ENCODE measurements at regions of chr4 and their contacts with region 1.

Region 1: DNA sequence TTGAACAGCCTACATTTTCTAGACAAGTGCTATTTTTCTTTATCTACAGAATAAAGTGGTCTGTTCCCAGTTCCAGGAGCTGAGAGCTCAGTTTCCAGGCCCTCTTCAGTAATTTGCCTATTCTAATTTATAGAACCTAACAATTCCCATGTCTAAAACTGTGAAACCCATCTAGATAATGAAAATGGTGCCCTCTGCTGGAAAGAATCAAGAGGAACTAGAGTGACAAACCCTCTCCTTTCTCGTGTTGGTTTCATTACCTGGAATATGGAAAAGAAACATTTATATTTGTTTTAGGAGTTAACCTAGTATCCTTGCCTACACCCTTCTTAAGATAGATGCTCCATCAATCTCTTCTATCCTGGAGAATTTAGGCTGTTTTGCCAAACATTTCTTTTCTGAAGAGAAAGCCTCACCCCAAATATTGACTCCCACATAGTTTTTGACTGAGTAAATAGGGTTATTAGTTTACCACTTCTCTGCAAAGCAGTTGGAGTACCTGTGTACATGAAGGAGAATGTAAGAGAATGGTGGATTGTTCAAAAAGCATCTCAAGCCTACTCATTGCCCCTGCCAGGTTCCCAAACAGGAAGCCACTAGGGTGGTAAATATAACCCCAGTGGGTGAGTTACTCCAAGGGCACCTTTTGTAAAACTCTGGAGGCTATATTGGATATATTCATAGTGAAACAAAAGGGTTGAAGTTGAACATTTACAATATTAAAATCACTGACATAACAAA is 121.6 kb downstream of the RASL11B start:
- DNase-seq: peak; percentile 50
- ATAC-seq: peak; percentile 81
- H3K4me3 ChIP-seq: no peak overlapping the region
- H3K27ac ChIP-seq: no peak overlapping the region
- H3K4me1 ChIP-seq: peaks cover 2 to 4% of the 10 kb centered on the region in 2 experiments; a peak in 1 of 4 replicates
- H3K27me3 ChIP-seq: no peaks in the 10 kb centered on the region
- CTCF ChIP-seq: peak; percentile 45 to 68 (median 60); a peak in 5 of 6 replicates
- POLR2A ChIP-seq: no peak
- RAD21 ChIP-seq: peak; percentile 69

Region 2: DNA sequence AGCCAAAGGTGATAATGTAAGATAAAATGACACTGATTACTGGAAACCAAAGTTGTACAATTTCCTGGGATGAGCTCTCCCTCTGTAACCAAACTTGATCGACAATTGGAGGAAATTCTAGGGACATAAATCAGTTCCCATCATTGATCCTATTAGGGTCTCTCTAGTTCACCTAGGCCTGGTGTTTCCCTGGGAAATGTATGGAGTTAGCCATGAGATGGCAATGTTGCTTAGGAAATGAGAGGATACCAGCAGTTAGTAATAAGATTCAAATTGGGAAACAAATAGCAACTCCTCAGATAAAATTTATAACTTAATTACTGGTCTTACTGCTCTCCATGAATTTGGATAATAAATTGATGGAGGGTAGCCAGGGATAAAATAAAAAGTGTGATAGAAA is 880.4 kb before region 1 on chr4:
- CTCF ChIA-PET with region 1: no interaction called
- POLR2A ChIA-PET with region 1: no interaction called
- RAD21 ChIA-PET with region 1: no interaction called
- intact Hi-C with region 1: loop called (anchors 2 kb)
- DNase-seq: no peak
- ATAC-seq: no peak; the same call in 1 of the 2 replicates
- H3K4me3 ChIP-seq: no peak overlapping the region
- H3K27ac ChIP-seq: no peak overlapping the region
- H3K4me1 ChIP-seq: no peaks in the 10 kb centered on the region
- H3K27me3 ChIP-seq: no peaks in the 10 kb centered on the region
- CTCF ChIP-seq: peak in 2 of 3 experiments; percentile 19 to 34; a peak in 2 of 6 replicates
- POLR2A ChIP-seq: no peak
- RAD21 ChIP-seq: peak; percentile 33; the same call in 1 of the 2 replicates

Region 3: DNA sequence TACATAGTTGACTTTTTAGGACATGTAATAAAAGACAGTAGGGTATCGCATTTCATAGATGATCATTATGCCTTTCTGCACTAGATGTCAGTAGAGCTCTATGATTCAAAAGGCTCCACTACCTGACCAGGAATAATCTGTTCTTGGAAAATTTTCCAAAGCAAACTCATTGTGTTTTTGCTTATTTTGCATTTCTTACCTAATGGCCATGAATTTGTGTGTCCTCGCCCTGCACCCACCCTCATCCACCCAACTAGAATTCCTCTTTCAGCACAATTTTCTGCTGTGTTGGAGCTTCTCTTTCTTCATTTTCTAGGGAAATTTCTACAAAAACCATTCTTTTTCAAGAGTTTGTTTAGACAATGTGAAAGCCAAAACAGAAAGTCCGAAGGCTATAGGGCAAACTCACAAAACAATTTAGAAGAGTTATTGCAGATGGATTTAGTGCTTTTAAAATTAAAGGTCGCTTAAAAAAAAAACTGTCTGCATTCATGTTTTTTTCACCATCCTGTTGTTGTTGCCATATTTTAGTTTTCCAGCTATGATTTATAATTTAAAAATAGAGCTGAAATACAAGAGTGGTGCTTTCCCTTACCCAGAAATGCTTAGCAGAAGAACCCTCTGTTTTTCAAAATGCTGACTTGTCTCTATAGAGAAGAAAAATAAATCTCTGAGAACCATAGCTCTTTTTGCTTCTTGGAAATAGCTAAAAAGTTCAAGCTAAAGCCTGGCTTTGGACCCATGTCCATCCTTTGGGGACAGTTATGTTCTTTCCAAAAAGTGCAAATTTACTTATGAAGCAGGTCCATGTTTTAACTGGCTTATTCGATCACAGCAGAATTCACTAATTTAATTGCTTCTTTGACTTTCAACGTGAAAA is 748.9 kb before region 1 on chr4:
- CTCF ChIA-PET with region 1: interaction called, 24 read pairs
- POLR2A ChIA-PET with region 1: no interaction called
- RAD21 ChIA-PET with region 1: no interaction called
- intact Hi-C with region 1: loop called (anchors 1 kb)
- DNase-seq: peak; percentile 41
- ATAC-seq: peak; percentile 89
- H3K4me3 ChIP-seq: no peak overlapping the region
- H3K27ac ChIP-seq: no peak overlapping the region
- H3K4me1 ChIP-seq: peaks cover 0 to 2% of the 10 kb centered on the region in 2 experiments; a peak in 1 of 4 replicates
- H3K27me3 ChIP-seq: peaks cover 19% of the 10 kb centered on the region
- CTCF ChIP-seq: peak; percentile 35 to 66 (median 51); a peak in 4 of 6 replicates
- POLR2A ChIP-seq: no peak
- RAD21 ChIP-seq: peak; percentile 79

Region 4: GRCh38 chr4:52376132-52376704 is 607.5 kb before region 1 on chr4:
- CTCF ChIA-PET with region 1: interaction called, 28 read pairs
- POLR2A ChIA-PET with region 1: no interaction called
- RAD21 ChIA-PET with region 1: no interaction called
- intact Hi-C with region 1: loop called (anchors 1 kb)
- DNase-seq: peak; percentile 33
- ATAC-seq: 0 out of 2 replicates have a peak, but pooled peaks have one; percentile 27
- H3K4me3 ChIP-seq: no peak overlapping the region
- H3K27ac ChIP-seq: no peak overlapping the region
- H3K4me1 ChIP-seq: no peaks in the 10 kb centered on the region
- H3K27me3 ChIP-seq: peaks cover 10% of the 10 kb centered on the region
- CTCF ChIP-seq: peak; percentile 33 to 74 (median 70); a peak in 4 of 6 replicates
- POLR2A ChIP-seq: no peak
- RAD21 ChIP-seq: peak; percentile 76

Region 5: DNA sequence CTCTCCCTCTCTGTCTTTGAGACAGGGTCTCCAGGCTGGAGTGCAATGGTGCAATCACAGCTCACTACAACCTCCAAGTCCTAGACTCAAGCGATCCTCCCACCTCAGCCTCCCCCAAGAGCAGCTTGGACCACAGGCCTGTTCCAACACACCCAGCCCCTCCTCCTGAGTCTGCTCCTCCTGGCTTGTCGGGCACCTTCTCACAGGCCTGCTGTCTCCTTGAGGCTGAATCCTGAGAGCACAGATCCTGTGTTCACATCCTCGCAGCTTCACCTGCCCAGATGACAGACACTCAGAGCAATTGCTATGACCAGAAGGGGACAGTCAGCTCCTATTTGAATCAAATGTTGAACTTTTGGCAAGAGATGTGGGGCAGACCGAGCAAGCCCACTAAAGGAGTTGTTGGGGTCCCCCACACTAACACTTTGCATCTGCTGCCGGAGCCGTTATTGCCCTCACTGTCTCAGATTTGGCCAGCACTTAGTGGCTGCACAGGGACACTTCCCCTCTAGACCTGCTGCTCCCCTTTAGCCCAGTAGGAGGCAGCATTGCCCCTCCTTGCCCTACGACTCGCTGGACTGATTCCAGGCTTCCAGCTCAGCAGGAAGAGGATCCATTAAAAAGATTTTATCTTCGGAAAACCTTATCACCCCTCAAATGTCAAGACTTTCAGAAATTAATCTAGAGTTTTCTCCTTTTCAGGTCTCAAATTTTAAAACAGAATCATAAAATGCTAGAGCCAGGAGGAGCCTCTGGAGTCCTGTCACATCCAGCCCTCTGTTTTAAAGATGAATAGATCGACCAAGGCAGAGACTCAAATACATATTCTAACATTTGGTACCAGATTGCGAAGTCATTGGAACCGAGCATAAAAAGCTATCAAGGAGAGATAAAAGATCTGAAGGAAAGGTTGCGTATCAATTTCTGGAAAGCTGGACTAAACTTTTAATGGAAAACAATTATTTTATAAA is 438.3 kb before region 1 on chr4:
- CTCF ChIA-PET with region 1: interaction called, 37 read pairs
- POLR2A ChIA-PET with region 1: no interaction called
- RAD21 ChIA-PET with region 1: interaction called, 3 to 9 read pairs
- intact Hi-C with region 1: loop called (anchors 2 kb)
- DNase-seq: peak; percentile 52
- ATAC-seq: peak; percentile 97
- H3K4me3 ChIP-seq: no peak overlapping the region; a peak in 1 of 4 replicates
- H3K27ac ChIP-seq: no peak overlapping the region
- H3K4me1 ChIP-seq: peaks cover 0 to 3% of the 10 kb centered on the region in 2 experiments; a peak in 1 of 4 replicates
- H3K27me3 ChIP-seq: no peaks in the 10 kb centered on the region
- CTCF ChIP-seq: peak; percentile 84 to 98 (median 95)
- POLR2A ChIP-seq: no peak
- RAD21 ChIP-seq: peak; percentile 94

Region 6: GRCh38 chr4:52588097-52588782 is 395.5 kb before region 1 on chr4:
- CTCF ChIA-PET with region 1: interaction called, 10 read pairs
- POLR2A ChIA-PET with region 1: no interaction called
- RAD21 ChIA-PET with region 1: no interaction called
- intact Hi-C with region 1: loop called (anchors 1 kb)
- DNase-seq: peak; percentile 12
- ATAC-seq: peak; percentile 87
- H3K4me3 ChIP-seq: no peak overlapping the region
- H3K27ac ChIP-seq: no peak overlapping the region
- H3K4me1 ChIP-seq: no peaks in the 10 kb centered on the region
- H3K27me3 ChIP-seq: no peaks in the 10 kb centered on the region
- CTCF ChIP-seq: peak; percentile 21 to 75 (median 63); a peak in 5 of 6 replicates
- POLR2A ChIP-seq: no peak
- RAD21 ChIP-seq: peak; percentile 55

Region 7: GRCh38 chr4:52665592-52665991 is 318.1 kb before region 1 on chr4:
- CTCF ChIA-PET with region 1: no interaction called
- POLR2A ChIA-PET with region 1: no interaction called
- RAD21 ChIA-PET with region 1: no interaction called
- intact Hi-C with region 1: loop called (anchors 2 kb)
- DNase-seq: peak; percentile 44
- ATAC-seq: peak; percentile 86
- H3K4me3 ChIP-seq: no peak overlapping the region
- H3K27ac ChIP-seq: no peak overlapping the region
- H3K4me1 ChIP-seq: peaks cover 4 to 23% of the 10 kb centered on the region in 2 experiments; a peak in 3 of 4 replicates
- H3K27me3 ChIP-seq: no peaks in the 10 kb centered on the region
- CTCF ChIP-seq: peak; percentile 38 to 82 (median 57)
- POLR2A ChIP-seq: no peak
- RAD21 ChIP-seq: peak; percentile 76

Region 8: GRCh38 chr4:53015681-53016080 is 31.9 kb after region 1 on chr4:
- CTCF ChIA-PET with region 1: no interaction called
- POLR2A ChIA-PET with region 1: no interaction called
- RAD21 ChIA-PET with region 1: no interaction called
- intact Hi-C with region 1: no loop called
- DNase-seq: peak; percentile 26
- ATAC-seq: peak; percentile 52; the same call in 1 of the 2 replicates
- H3K4me3 ChIP-seq: no peak overlapping the region
- H3K27ac ChIP-seq: no peak overlapping the region
- H3K4me1 ChIP-seq: peaks cover 3 to 8% of the 10 kb centered on the region in 2 experiments; a peak in 2 of 4 replicates
- H3K27me3 ChIP-seq: no peaks in the 10 kb centered on the region
- CTCF ChIP-seq: peak; percentile 57 to 73 (median 60); a peak in 5 of 6 replicates
- POLR2A ChIP-seq: no peak
- RAD21 ChIP-seq: peak; percentile 73